H1 (cell line): ENCODE measurements at regions of chr14 and their contacts with region 1.

Region 1: GRCh38 chr14:96512602-96513397 is 10.6 kb downstream of the PAPOLA start:
- DNase-seq: no peak
- H3K4me3 ChIP-seq: peak overlapping the region in 1 of 4 experiments; percentile 36; a peak in 2 of 8 replicates
- H3K27ac ChIP-seq: no peak overlapping the region
- H3K4me1 ChIP-seq: peaks cover 0 to 16% (median 6%) of the 10 kb centered on the region in 4 experiments; a peak in 6 of 7 replicates
- H3K27me3 ChIP-seq: no peaks in the 10 kb centered on the region
- CTCF ChIP-seq: no peak
- EP300 ChIP-seq: no peak
- POLR2A ChIP-seq: no peak
- RAD21 ChIP-seq: no peak

Region 2: GRCh38 chr14:96501742-96502617 is 10.8 kb before region 1 on chr14 and contains the start of gene PAPOLA:
- CTCF ChIA-PET with region 1: interaction called, 3 read pairs
- POLR2A ChIA-PET with region 1: interaction called, 13 read pairs
- DNase-seq: peak; percentile 87 to 97
- H3K4me3 ChIP-seq: peak within 1 kb of the TSS; percentile 85 to 99 (median 94)
- H3K27ac ChIP-seq: peak within 1 kb of the TSS; percentile 97
- H3K4me1 ChIP-seq: peaks cover 0 to 7% (median 2%) of the 10 kb centered on the region in 4 experiments; a peak in 3 of 7 replicates
- H3K27me3 ChIP-seq: no peaks in the 10 kb centered on the region
- CTCF ChIP-seq: peak in 2 of 3 experiments; percentile 8 to 10; a peak in 2 of 4 replicates
- EP300 ChIP-seq: no peak
- POLR2A ChIP-seq: peak; percentile 92 to 97
- RAD21 ChIP-seq: no peak
- total RNA-seq, gene PAPOLA: 234 and 239 TPM in 2 replicates